Head of caudate nucleus (tissue), 42 donors: ENCODE measurements at regions of chr15 and their contacts with region 1.

Region 1: DNA sequence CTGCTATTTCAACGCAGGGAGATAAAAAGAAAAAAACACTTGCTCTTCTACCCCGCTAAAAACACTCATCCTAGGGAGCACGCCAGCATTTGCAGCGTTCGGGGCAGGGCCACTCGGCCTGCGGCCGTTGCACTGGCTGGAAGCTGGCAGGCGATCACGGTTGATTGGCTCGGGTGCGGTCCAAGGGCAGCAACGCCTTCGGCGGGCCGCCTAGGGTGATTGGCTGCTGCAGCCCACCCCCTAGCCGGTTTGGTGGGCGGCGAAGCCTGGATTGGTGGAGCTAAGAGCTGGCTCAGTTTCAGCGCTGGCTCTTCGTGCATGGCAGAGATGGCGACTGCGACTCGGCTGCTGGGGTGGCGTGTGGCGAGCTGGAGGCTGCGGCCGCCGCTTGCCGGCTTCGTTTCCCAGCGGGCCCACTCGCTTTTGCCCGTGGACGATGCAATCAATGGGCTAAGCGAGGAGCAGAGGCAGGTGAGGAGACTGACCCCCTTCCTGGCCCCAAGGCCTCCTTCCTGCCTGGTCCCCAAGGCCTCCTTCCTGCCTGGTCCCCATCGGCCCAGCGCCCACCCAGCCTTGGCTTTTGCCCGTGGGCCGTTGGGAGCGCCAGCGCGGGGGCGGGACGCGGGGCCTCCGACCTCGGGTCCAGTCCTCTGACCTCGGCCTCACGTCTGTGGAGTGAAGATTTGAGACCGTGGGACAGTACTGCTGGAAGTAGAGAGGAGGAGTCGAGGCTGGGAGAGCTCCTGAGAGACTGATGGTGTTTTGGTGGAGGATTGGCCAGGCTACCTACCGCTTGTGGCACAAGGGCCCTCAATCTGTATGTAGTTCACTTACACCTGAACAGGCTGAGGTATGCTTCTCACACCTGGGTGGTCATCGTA is at the start of gene IVD:
- DNase-seq: peak; percentile 94 to 99 (median 98)

Region 2: DNA sequence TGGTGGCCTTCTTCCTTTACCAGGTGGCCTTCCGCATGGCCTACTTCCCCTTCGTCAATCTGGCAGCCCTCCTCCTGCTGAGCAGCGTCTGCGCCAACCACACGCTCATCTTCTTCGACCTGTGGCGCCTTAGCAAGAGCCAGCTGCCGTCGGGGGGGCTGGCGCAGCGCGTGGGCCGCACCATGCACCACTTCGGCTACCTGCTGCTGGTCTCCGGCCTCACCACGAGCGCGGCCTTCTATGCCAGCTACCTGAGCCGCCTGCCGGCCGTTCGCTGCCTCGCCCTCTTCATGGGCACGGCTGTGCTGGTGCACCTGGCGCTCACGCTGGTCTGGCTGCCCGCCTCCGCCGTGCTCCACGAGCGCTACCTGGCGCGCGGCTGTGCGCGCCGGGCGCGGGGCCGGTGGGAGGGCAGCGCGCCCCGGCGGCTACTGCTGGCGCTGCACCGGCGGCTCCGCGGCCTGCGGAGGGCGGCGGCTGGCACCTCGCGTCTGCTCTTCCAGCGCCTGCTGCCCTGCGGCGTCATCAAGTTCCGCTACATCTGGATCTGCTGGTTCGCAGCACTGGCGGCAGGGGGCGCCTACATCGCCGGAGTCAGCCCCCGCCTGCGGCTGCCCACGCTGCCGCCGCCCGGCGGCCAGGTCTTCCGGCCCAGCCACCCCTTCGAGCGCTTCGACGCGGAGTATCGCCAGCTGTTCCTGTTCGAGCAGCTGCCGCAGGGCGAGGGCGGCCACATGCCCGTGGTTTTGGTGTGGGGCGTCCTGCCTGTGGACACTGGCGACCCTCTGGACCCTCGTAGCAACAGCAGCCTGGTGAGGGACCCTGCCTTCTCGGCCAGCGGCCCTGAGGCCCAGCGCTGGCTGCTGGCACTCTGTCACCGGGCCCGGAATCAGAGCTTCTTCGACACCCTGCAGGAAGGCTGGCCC is 37.8 kb before region 1 on chr15:
- intact Hi-C with region 1: loop called (anchors 5 kb)
- DNase-seq: peak; percentile 59 to 89 (median 77)